ENCODE measurements at regions of chr6 and their contacts with region 1.

Region 1: DNA sequence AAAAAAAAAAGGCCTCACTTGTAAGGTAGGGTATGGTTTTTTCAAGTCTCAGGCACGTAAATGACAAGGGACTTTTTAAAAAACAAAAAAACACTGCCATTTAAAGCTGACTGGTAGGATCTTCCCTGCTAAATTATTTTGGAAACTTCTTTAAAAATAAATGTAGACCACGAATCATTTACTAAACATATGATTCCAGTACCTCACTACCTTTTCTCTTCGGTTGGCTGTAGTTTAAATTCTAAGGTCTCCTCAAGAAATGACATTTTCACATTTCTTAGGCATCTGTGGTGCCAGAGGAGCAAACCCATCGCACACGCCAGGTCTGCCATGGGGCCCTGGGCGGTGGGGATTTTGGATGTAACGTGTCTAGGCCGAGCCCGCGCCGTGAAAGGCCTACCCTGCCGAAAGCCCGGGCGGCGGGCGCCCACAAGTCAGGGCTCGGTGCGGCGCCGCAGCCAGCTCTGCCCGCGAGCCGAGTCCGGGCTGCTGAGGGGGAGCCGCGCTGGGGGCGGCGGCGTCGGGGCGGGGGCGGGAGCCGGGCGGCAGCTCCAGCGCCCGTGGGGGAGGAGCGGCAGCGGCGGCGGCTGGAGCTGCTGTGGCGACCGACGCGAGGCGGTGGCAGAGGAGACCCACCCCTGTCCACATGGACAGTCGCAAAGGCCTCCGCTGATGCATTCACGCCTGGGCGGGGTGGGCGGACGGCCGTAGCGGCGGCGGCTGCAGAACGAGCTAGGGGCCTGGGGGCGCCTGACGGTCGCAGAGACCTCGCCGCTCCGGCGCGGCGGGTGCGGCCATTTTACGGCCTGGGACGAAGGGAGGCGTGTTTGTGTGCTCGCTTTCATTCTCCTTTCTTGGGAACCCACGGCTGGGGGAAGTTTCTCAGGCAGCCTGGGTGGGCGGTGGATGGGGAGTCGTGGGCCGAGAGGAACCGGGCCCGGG is at the start of gene SENP6:
- DNase-seq: peak; percentile 79
- H3K4me3 Mint-ChIP-seq: peak within 1 kb of the TSS; percentile 99
- H3K27ac Mint-ChIP-seq: peak within 1 kb of the TSS; percentile 98
- H3K4me1 Mint-ChIP-seq: peaks cover 60% of the 10 kb centered on the region
- H3K27me3 Mint-ChIP-seq: no peaks in the 10 kb centered on the region
- total RNA-seq, gene SENP6: 57.1 to 59.4 TPM

Region 2: DNA sequence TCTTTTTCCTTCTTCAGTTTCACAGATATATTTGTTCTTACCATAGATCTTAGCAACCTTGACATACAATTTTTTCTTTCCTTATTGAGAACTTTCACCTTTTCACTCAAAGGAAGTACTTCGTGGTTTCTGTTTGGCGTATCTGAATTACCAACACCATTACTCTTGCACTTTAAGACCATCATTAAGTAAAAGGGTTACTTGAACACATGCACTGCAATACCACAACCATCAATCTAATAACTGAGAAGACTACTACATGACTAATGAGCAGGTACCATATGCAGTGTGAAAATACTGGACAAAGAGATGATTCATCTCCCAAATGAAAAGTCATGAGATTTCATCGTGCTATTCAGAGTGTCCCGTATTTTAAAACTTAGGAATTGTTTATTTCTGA is 21.6 kb before region 1 on chr6:
- CTCF ChIA-PET with region 1: no interaction called
- POLR2A ChIA-PET with region 1: no interaction called
- intact Hi-C with region 1: loop called (anchors 2 kb)
- DNase-seq: no peak
- H3K4me3 Mint-ChIP-seq: no peak overlapping the region
- H3K27ac Mint-ChIP-seq: no peak overlapping the region
- H3K4me1 Mint-ChIP-seq: peaks cover 13% of the 10 kb centered on the region
- H3K27me3 Mint-ChIP-seq: peaks cover 12% of the 10 kb centered on the region

Region 3: GRCh38 chr6:75590370-75590769 is 11.2 kb before region 1 on chr6:
- CTCF ChIA-PET with region 1: no interaction called
- POLR2A ChIA-PET with region 1: no interaction called
- intact Hi-C with region 1: no loop called
- DNase-seq: no peak
- H3K4me3 Mint-ChIP-seq: no peak overlapping the region
- H3K27ac Mint-ChIP-seq: no peak overlapping the region
- H3K4me1 Mint-ChIP-seq: no peaks in the 10 kb centered on the region
- H3K27me3 Mint-ChIP-seq: no peaks in the 10 kb centered on the region

Region 4: GRCh38 chr6:75611702-75612375 is 10.3 kb after region 1 on chr6:
- CTCF ChIA-PET with region 1: interaction called, 3 read pairs
- POLR2A ChIA-PET with region 1: interaction called, 26 read pairs
- intact Hi-C with region 1: loop called (anchors 1 kb)
- DNase-seq: peak; percentile 79
- H3K4me3 Mint-ChIP-seq: peak overlapping the region; percentile 10
- H3K27ac Mint-ChIP-seq: peak overlapping the region; percentile 63
- H3K4me1 Mint-ChIP-seq: peaks cover 85% of the 10 kb centered on the region
- H3K27me3 Mint-ChIP-seq: no peaks in the 10 kb centered on the region

Measured in activated CD4-positive, alpha-beta memory T cell treated with anti-CD3 and anti-CD28 coated beads for 36 hours (primary cell).